Posterior cingulate gyrus (tissue), 11 donors: ENCODE measurements at regions of chr16 and their contacts with region 1.

Region 1: DNA sequence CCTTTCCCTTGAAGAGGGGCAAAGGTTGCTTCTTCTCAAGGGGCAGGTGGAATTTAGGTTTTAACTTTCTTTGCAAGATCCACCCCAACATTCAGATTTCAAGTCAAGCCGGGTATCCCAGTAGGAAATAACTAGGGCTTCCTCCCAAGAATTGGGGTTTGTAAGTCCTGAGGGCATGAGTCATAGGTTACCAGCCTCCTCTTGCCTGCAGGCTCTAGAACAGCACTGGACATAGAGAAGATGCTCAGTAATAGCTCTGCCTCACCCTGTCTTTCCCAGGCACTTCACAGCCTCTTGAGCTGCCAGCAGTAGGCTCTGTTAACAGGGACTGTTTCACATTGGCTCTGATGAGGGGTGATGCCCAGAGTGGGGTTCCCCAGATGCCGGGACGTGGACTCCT is 35.8 kb upstream of the ZFP90 start:
- DNase-seq: peak in 3 of 10 donors; percentile 30 to 39 (median 34)

Region 2: GRCh38 chr16:68369697-68370580 is 133.4 kb before region 1 on chr16:
- intact Hi-C with region 1: loop called (anchors 10 kb)
- DNase-seq: peak in 3 of 10 donors; percentile 76 to 84 (median 77)

Region 3: GRCh38 chr16:68406451-68407152 is 96.7 kb before region 1 on chr16:
- intact Hi-C with region 1: no loop called
- DNase-seq: peak in 1 of 10 donors; percentile 68

Region 4: DNA sequence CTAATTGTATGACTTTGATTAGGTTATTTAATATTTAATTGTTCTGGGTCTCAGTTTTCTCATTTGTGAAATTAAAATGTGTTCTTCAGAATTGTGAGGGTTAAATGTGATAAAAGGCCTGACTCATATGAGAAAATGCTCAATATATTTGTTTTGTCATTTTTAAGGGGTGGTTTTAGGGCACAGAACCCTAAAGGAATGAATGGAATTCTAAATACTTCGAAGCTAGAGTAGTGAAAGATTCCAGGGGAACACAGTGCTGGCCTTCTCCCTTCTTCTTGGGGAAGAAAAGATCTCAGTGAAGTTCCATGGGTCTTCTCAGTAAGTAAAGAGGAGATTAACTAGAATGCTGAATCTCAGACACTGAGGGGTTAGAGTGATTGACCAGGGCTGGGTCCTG is 51.2 kb before region 1 on chr16:
- intact Hi-C with region 1: loop called (anchors 5 kb)
- DNase-seq: no peak